Mammary epithelial cell (primary cell): ENCODE measurements at regions of chr22 and their contacts with region 1.

Region 1: GRCh38 chr22:41697126-41697775 is 2.1 kb upstream of the MEI1 start:
- DNase-seq: peak; percentile 64
- H3K4me3 ChIP-seq: peak overlapping the region in 1 of 3 experiments; percentile 28
- H3K27ac ChIP-seq: no peak overlapping the region
- H3K4me1 ChIP-seq: peaks cover 17% of the 10 kb centered on the region
- H3K27me3 ChIP-seq: no peaks in the 10 kb centered on the region
- CTCF ChIP-seq: peak; percentile 88 to 98

Region 2: GRCh38 chr22:41532908-41533825 is 164.1 kb before region 1 on chr22:
- CTCF ChIA-PET with region 1: no interaction called
- dilution Hi-C with region 1: no loop called
- in situ Hi-C with region 1: no loop called
- intact Hi-C with region 1: no loop called
- DNase-seq: no peak
- H3K4me3 ChIP-seq: no peak overlapping the region
- H3K27ac ChIP-seq: no peak overlapping the region
- H3K4me1 ChIP-seq: no peaks in the 10 kb centered on the region
- H3K27me3 ChIP-seq: no peaks in the 10 kb centered on the region
- CTCF ChIP-seq: peak; percentile 76 to 78

Region 3: DNA sequence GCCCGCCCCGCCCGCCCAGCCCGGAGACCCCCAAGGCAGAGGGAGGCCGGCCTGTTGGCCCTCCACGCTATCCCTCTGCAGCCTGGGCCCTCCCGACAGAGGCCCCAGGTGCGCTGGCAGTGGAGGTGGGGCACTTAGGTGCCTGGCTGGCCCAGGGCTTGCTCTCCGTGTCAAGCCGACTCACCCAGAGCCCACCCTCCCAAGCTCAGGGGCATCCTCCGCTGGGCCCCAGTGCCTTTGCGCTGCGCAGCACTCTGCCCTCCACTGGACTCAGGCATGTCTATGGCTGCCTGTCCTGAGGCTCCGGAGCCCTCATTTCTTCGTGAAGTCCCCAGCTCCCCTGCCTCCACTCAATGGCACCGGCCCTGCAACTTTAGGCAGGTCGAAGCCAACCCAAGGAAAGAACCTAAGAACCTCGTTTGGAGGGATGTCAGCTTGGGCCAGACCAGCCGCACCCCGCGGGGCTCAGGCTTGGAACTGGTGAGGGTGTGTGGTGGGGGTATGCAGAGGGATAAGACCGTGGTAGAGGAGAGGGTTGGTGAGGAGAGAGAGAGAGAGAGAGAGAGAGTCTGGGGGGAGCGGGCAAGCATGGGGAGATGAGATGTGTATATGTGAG is 260.8 kb after region 1 on chr22:
- CTCF ChIA-PET with region 1: no interaction called
- dilution Hi-C with region 1: loop called (anchors 10 kb)
- in situ Hi-C with region 1: no loop called
- intact Hi-C with region 1: loop called (anchors 1 kb)
- DNase-seq: no peak
- H3K4me3 ChIP-seq: no peak overlapping the region
- H3K27ac ChIP-seq: no peak overlapping the region
- H3K4me1 ChIP-seq: no peaks in the 10 kb centered on the region
- H3K27me3 ChIP-seq: no peaks in the 10 kb centered on the region
- CTCF ChIP-seq: no peak